ENCODE measurements at regions of chr12 and their contacts with region 1.

Region 1: GRCh38 chr12:49967042-49967776 is 5.5 kb downstream of the AQP5 start:
- DNase-seq: peak; percentile 98
- H3K4me3 ChIP-seq: peak overlapping the region; percentile 39 to 58 (median 46)
- H3K27ac ChIP-seq: no peak overlapping the region
- H3K4me1 ChIP-seq: peaks cover 15 to 24% (median 20%) of the 10 kb centered on the region in 4 donors
- H3K27me3 ChIP-seq: peaks cover 0 to 43% (median 3%) of the 10 kb centered on the region in 4 donors
- CTCF ChIP-seq: peak; percentile 72 to 96 (median 82)
- EP300 ChIP-seq: no peak
- POLR2A ChIP-seq: no peak

Region 2: GRCh38 chr12:49776413-49776812 is 190.8 kb before region 1 on chr12:
- intact Hi-C with region 1: loop called (anchors 10 kb)
- DNase-seq: no peak
- H3K4me3 ChIP-seq: no peak overlapping the region
- H3K27ac ChIP-seq: no peak overlapping the region
- H3K4me1 ChIP-seq: peaks cover 0 to 16% (median 6%) of the 10 kb centered on the region in 4 donors
- H3K27me3 ChIP-seq: peaks cover 0 to 7% (median 0%) of the 10 kb centered on the region in 4 donors
- CTCF ChIP-seq: peak; percentile 64 to 80 (median 79)
- EP300 ChIP-seq: no peak
- POLR2A ChIP-seq: no peak

Region 3: DNA sequence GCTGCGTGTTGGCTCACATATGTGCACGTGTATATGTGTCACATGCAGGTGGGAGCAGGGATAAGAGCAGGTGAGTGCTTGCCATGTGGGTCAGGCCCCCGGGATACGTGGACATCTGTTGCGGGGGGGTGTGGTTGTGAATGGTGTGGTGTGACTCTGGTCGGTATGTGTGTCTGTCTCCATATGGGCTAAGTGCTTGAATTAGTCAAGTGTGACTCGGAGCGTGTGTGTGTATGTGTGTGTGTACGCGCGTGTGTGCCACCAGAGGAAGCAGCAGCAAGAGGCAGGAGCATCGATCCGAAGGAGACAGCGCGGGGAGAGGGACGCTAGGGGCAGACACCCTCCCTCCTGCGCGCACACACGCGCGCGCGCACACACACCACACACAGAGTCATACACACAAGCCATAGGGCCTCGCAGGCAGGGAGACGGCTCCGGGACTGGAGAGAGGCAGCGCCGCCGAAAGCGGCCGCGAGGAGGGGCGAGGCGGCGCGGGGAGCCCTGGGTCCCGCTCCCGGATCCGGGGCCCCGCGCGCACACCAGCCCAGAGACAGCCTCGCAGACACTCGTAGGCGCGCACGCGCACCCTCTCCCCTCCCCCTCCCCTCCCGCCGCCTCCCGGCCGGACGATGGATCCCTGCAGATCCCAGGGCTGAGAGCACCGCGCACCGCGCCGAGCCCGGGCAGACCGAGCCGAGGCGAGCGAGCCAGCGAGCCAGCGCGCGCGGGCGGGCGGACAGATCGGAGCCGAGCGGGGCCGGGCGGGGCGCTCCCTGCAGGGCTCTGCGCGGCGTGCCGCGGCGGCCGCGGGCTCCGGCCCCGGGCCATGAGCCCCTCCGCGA is 90.0 kb after region 1 on chr12 and contains the start of gene ASIC1:
- intact Hi-C with region 1: loop called (anchors 1 kb)
- DNase-seq: no peak
- H3K4me3 ChIP-seq: peak within 1 kb of the TSS; percentile 72 to 84 (median 74)
- H3K27ac ChIP-seq: peak within 1 kb of the TSS; percentile 62 to 83 (median 74)
- H3K4me1 ChIP-seq: peaks cover 20 to 32% (median 26%) of the 10 kb centered on the region in 4 donors
- H3K27me3 ChIP-seq: peaks cover 0 to 13% (median 0%) of the 10 kb centered on the region in 4 donors
- CTCF ChIP-seq: peak; percentile 12 to 31 (median 22)
- EP300 ChIP-seq: no peak
- POLR2A ChIP-seq: no peak
- total RNA-seq, gene ASIC1: 0.66 to 5.6 (median 2.9) TPM

Region 4: GRCh38 chr12:50074936-50075807 is 108.0 kb after region 1 on chr12:
- intact Hi-C with region 1: loop called (anchors 2 kb)
- DNase-seq: peak; percentile 95
- H3K4me3 ChIP-seq: no peak overlapping the region
- H3K27ac ChIP-seq: no peak overlapping the region
- H3K4me1 ChIP-seq: peaks cover 3 to 17% (median 13%) of the 10 kb centered on the region in 4 donors
- H3K27me3 ChIP-seq: no peaks in the 10 kb centered on the region
- CTCF ChIP-seq: peak in 2 of 3 experiments; percentile 91 to 98
- EP300 ChIP-seq: no peak
- POLR2A ChIP-seq: no peak

Region 5: DNA sequence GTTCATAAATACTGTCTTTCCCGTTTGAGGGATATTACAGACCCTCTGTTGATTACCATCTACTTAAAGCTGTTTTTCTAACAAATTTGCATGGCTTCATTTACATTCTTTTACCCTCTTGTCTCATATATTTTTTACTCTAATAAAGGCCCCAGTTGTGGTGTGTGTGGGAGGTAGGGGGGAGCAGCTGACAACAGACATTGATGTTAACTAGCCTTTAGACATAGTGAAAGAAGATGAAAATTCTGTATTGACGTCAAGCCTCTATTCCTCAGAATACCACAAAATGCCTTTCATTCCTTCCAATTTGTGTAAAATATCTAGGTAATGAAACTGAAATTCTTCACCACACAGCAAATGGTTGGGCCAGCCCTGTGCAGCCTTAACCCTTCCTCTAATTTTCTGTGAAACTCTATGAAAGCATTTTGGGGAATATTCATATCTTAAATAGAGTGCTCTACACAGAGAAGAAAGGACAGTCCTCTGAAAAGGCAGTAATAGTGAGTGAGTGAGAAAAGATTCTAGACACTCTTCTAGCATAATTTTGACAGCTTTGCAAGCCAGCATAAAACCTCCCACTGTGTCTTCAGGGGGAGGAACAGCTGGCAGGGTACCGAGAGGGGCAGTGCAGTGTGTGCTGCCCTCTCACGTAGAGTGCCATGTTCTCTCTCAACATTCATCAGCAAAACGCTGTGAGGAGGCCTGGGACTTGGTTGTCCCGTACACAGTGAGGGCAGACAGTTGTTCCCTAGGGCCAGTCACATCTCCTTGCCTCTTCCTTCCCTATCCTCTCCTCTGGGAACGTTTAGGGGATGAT is 220.1 kb after region 1 on chr12:
- intact Hi-C with region 1: loop called (anchors 10 kb)
- DNase-seq: no peak
- H3K4me3 ChIP-seq: no peak overlapping the region
- H3K27ac ChIP-seq: peak overlapping the region; percentile 45 to 62 (median 52)
- H3K4me1 ChIP-seq: peaks cover 22 to 43% (median 29%) of the 10 kb centered on the region in 4 donors
- H3K27me3 ChIP-seq: no peaks in the 10 kb centered on the region
- CTCF ChIP-seq: no peak
- EP300 ChIP-seq: no peak
- POLR2A ChIP-seq: no peak

Measured in esophagus muscularis mucosa (tissue), 4 donors.